ENCODE measurements at regions of chr7 and their contacts with region 1.

Region 1: DNA sequence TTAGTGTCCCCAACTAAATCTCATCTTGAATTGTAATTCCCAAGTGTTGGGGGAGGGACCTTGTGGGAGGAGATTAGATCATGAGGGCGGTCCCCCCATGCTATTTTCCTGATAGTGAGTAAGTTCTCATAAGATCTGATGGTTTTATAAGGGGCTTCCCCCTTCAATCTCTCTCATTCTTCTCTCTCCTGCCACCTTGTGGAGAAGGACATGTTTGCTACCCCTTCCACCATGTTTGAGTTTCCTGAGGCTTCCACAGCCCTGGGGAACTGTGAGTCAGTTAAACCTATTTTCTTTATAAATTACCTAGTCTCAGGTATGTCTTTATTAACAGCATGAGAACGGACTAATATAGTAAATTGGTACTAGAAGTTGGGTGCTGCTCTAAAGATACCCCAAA is 365.6 kb downstream of the ANKRD7 start:
- DNase-seq: no peak
- H3K4me3 Mint-ChIP-seq: no peak overlapping the region
- H3K27ac Mint-ChIP-seq: no peak overlapping the region
- H3K4me1 Mint-ChIP-seq: no peaks in the 10 kb centered on the region
- H3K27me3 Mint-ChIP-seq: no peaks in the 10 kb centered on the region

Region 2: GRCh38 chr7:118250860-118251494 is 339.1 kb before region 1 on chr7:
- intact Hi-C with region 1: loop called (anchors 10 kb)
- DNase-seq: no peak
- H3K4me3 Mint-ChIP-seq: no peak overlapping the region
- H3K27ac Mint-ChIP-seq: no peak overlapping the region
- H3K4me1 Mint-ChIP-seq: no peaks in the 10 kb centered on the region
- H3K27me3 Mint-ChIP-seq: peaks cover 8% of the 10 kb centered on the region

Region 3: GRCh38 chr7:118731854-118732253 is 141.7 kb after region 1 on chr7:
- intact Hi-C with region 1: no loop called
- DNase-seq: no peak
- H3K4me3 Mint-ChIP-seq: no peak overlapping the region
- H3K27ac Mint-ChIP-seq: no peak overlapping the region
- H3K4me1 Mint-ChIP-seq: no peaks in the 10 kb centered on the region
- H3K27me3 Mint-ChIP-seq: no peaks in the 10 kb centered on the region

Measured in activated CD4-positive, alpha-beta T cell treated with anti-CD3 and anti-CD28 coated beads, Interleukin-2, amount 10 ng/mL, durations not matched to agents 24 days and 14 days (primary cell).